Motor neuron (in vitro differentiated cells): ENCODE measurements at regions of chr4 and their contacts with region 1.

Region 1: DNA sequence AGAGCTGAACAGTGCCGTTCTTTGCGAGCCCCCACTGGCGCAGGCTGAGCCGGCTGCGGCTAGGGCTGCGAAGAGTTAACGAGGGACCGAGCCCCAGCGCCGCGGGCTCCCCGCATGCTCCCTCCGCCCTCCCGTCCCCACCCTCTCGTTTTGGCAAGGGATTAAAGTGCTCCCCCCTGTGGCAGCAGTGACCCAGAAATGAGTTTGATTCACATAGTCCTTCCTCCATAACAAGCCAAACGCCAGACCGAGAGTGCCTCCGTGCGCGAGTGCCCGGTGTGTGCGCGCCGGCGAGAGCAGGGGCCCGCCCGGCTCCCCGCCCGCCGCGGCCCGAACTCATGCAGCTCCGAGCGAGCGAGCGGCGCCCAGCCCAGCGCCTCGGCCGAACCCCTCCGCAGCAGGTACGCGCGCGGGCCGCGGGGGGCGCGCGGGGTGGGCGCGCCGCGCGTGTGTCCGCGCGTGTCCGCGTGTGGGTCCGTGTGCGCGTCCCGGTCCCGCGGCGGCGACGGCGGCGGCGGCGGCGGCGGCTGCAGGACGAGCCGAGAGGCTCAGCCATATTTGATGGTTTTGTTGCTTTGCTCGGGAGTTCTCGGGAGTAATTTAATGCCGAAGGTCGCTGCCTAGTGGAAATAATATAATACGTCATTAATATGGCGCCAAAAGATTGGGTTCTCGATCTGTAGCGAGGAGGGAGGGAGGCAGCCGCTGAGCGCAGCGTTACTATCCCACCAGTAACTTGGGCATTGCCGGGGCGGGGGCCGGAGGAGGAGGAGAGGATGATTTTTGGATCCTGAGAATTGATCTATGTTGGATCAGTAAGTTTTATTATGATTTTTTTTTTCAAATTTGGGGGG is at the start of gene JADE1:
- ATAC-seq: peak; percentile 67 to 77 (median 72)
- H3K4me3 ChIP-seq: peak within 1 kb of the TSS; percentile 59 to 85 (median 62)
- H3K27ac ChIP-seq: peak within 1 kb of the TSS; percentile 86 to 90
- H3K4me1 ChIP-seq: no peaks in the 10 kb centered on the region
- total RNA-seq, gene JADE1: 8.1 to 31.4 (median 20.7) TPM

Region 2: GRCh38 chr4:128287871-128288688 is 521.6 kb before region 1 on chr4:
- in situ Hi-C with region 1: loop called in 1 of 9 experiments (anchors 25 kb)
- ATAC-seq: peak; percentile 78 to 91 (median 88)
- H3K4me3 ChIP-seq: peak overlapping the region; percentile 49 to 86 (median 56)
- H3K27ac ChIP-seq: peak overlapping the region; percentile 67 to 87
- H3K4me1 ChIP-seq: peaks cover 0 to 14% of the 10 kb centered on the region in 2 donors

Region 3: DNA sequence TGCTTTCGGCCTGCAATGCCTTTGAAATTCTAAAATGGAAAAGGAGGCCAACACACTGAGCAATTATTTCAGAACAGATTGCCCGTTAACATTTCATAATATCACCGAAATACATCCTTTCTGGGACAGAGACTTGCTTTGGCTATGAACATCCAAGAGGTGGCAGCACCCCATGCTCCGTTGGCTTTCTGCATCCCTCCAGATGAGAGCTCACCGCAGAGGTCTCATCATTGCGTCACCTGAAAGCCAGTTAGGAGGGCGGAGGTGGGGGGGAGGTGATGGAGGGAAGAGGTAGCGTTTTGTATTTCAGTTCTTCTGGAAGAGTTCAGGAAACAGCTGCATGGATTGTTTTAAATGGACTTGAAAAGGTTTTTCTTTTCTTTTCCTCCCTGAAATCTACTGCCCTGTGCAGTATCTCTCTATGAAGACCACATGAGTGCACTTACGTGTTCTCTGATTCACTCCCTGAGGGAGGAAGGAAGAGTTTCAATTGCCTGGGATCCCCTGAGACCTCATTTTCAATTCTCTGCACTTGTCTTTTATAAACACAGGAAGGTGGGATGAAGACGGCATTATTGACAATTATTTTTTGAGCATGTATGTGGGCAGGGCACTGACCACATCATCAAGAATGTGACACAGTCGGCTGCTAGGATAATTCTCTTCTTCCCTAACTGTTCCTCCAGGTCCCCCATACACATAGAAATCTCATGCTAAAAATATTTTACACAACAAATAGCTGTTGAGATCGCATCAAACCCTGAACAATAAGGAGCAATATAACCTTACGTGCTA is 355.2 kb before region 1 on chr4:
- in situ Hi-C with region 1: loop called in 3 of 9 experiments (anchors 25 kb)
- ATAC-seq: peak; percentile 93 to 99 (median 98)
- H3K4me3 ChIP-seq: no peak overlapping the region
- H3K27ac ChIP-seq: no peak overlapping the region
- H3K4me1 ChIP-seq: peaks cover 11 to 30% of the 10 kb centered on the region in 2 donors

Region 4: GRCh38 chr4:128583753-128584712 is 225.7 kb before region 1 on chr4:
- in situ Hi-C with region 1: loop called in 1 of 9 experiments (anchors 10 kb)
- ATAC-seq: peak in 5 of 8 experiments; percentile 20 to 98 (median 68)
- H3K4me3 ChIP-seq: no peak overlapping the region
- H3K27ac ChIP-seq: no peak overlapping the region
- H3K4me1 ChIP-seq: no peaks in the 10 kb centered on the region

Region 5: DNA sequence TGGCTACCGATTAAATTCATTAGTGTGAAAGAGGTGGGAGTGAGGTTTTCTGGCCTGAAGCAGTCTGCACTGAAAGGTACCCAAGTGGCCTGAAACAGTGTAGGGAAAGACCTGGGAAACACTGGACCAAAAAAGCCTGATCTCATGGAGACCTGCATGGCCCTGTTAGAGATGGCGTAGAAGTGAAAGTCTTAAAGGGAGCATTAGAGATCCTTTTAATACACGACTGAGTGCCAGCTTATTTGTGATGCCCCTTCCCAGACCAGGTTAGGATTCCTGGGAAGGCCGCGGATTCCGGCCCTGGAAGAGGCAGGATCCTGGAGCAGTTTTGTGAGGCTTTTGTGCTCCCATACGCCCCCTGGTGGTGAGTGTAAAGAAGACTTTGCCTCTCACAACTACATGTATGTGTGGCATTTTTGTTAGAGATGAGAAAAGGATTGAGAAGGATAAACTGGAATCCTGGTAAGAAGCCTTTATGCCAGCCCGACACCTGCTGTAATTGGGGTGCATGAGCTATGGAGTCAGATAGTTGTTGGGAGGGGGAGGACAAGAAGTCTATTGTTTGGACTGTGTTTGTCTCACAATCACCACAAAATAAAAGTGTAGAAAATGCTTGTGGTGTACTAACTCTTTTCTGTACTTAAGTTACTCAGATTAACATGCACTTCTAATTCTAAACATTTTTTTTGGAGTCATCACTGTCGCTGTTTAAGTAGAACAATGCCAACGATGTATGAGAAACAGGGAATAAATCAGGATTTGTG is 53.8 kb after region 1 on chr4:
- in situ Hi-C with region 1: loop called in 1 of 9 experiments (anchors 10 kb)
- ATAC-seq: peak; percentile 12 to 87 (median 76)
- H3K4me3 ChIP-seq: no peak overlapping the region
- H3K27ac ChIP-seq: peak overlapping the region in 1 of 2 donors; percentile 8
- H3K4me1 ChIP-seq: peaks cover 0 to 2% of the 10 kb centered on the region in 2 donors